WTC11 (cell line): ENCODE measurements at regions of chr5 and their contacts with region 1.

Region 1: GRCh38 chr5:57137401-57137800 is 36.5 kb upstream of the GPBP1 start:
- DNase-seq: no peak
- ATAC-seq: no peak
- H3K4me3 Mint-ChIP-seq: no peak overlapping the region
- H3K27ac Mint-ChIP-seq: no peak overlapping the region
- H3K4me1 Mint-ChIP-seq: no peaks in the 10 kb centered on the region
- H3K27me3 Mint-ChIP-seq: no peaks in the 10 kb centered on the region; the same call in 1 of the 2 replicates
- CTCF ChIP-seq: no peak

Region 2: GRCh38 chr5:56900858-56901578 is 236.4 kb before region 1 on chr5:
- CTCF ChIA-PET with region 1: interaction called, 15 read pairs
- POLR2A ChIA-PET with region 1: no interaction called
- DNase-seq: peak; percentile 12
- ATAC-seq: peak; percentile 70
- H3K4me3 Mint-ChIP-seq: no peak overlapping the region
- H3K27ac Mint-ChIP-seq: no peak overlapping the region
- H3K4me1 Mint-ChIP-seq: no peaks in the 10 kb centered on the region
- H3K27me3 Mint-ChIP-seq: no peaks in the 10 kb centered on the region
- CTCF ChIP-seq: peak; percentile 48; the same call in 1 of the 2 replicates

Region 3: GRCh38 chr5:56909294-56910209 is 227.8 kb before region 1 on chr5 and contains the start of gene SETD9:
- CTCF ChIA-PET with region 1: interaction called, 22 read pairs
- POLR2A ChIA-PET with region 1: interaction called, 10 read pairs
- DNase-seq: peak; percentile 99
- ATAC-seq: peak; percentile 92
- H3K4me3 Mint-ChIP-seq: peak within 1 kb of the TSS; percentile 89
- H3K27ac Mint-ChIP-seq: peak within 1 kb of the TSS; percentile 98
- H3K4me1 Mint-ChIP-seq: peaks cover 28% of the 10 kb centered on the region
- H3K27me3 Mint-ChIP-seq: no peaks in the 10 kb centered on the region; the same call in 1 of the 2 replicates
- CTCF ChIP-seq: no peak
- total RNA-seq, gene SETD9: 6.7 to 9.5 TPM (median 8.1 TPM) in 3 replicates

Region 4: GRCh38 chr5:56950626-56951125 is 186.7 kb before region 1 on chr5:
- CTCF ChIA-PET with region 1: interaction called, 33 read pairs
- POLR2A ChIA-PET with region 1: interaction called, 8 read pairs
- DNase-seq: peak; percentile 53
- ATAC-seq: peak; percentile 60
- H3K4me3 Mint-ChIP-seq: peak overlapping the region; percentile 95
- H3K27ac Mint-ChIP-seq: peak overlapping the region; percentile 80
- H3K4me1 Mint-ChIP-seq: peaks cover 18% of the 10 kb centered on the region
- H3K27me3 Mint-ChIP-seq: peaks cover 20% of the 10 kb centered on the region
- CTCF ChIP-seq: no peak

Region 5: GRCh38 chr5:57094753-57095683 is 42.4 kb before region 1 on chr5:
- CTCF ChIA-PET with region 1: interaction called, 19 read pairs
- POLR2A ChIA-PET with region 1: interaction called, 3 read pairs
- DNase-seq: peak; percentile 81
- ATAC-seq: peak; percentile 84
- H3K4me3 Mint-ChIP-seq: no peak overlapping the region
- H3K27ac Mint-ChIP-seq: 0 out of 2 replicates have a peak overlapping the region, but pooled peaks have one; percentile 61
- H3K4me1 Mint-ChIP-seq: peaks cover 12% of the 10 kb centered on the region
- H3K27me3 Mint-ChIP-seq: peaks cover 3% of the 10 kb centered on the region
- CTCF ChIP-seq: peak; percentile 32; the same call in 1 of the 2 replicates

Region 6: DNA sequence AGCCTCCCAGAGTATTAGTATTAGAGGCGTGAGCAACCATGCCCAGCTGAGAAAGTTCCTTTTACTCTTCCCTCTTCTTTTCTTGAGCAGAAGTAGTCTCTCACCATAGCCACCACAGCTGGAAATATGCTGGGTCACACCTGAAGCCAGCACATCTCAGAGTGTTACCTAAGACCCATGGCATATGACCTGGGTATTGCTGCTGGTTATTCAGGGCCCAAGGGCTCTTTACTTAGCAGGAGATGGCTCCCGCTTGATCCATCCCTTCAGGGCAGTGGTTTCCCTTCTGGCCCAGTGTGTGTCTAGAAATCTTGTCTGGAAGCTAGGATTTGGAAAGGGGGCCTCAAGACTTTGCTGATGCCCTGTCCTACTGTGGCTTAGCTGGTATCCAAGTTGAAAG is 13.3 kb after region 1 on chr5:
- CTCF ChIA-PET with region 1: interaction called, 13 read pairs
- POLR2A ChIA-PET with region 1: interaction called, 4 read pairs
- DNase-seq: no peak
- ATAC-seq: no peak
- H3K4me3 Mint-ChIP-seq: no peak overlapping the region
- H3K27ac Mint-ChIP-seq: 0 out of 2 replicates have a peak overlapping the region, but pooled peaks have one; percentile 16
- H3K4me1 Mint-ChIP-seq: peaks cover 3% of the 10 kb centered on the region; the same call in 1 of the 2 replicates
- H3K27me3 Mint-ChIP-seq: no peaks in the 10 kb centered on the region
- CTCF ChIP-seq: no peak

Region 7: DNA sequence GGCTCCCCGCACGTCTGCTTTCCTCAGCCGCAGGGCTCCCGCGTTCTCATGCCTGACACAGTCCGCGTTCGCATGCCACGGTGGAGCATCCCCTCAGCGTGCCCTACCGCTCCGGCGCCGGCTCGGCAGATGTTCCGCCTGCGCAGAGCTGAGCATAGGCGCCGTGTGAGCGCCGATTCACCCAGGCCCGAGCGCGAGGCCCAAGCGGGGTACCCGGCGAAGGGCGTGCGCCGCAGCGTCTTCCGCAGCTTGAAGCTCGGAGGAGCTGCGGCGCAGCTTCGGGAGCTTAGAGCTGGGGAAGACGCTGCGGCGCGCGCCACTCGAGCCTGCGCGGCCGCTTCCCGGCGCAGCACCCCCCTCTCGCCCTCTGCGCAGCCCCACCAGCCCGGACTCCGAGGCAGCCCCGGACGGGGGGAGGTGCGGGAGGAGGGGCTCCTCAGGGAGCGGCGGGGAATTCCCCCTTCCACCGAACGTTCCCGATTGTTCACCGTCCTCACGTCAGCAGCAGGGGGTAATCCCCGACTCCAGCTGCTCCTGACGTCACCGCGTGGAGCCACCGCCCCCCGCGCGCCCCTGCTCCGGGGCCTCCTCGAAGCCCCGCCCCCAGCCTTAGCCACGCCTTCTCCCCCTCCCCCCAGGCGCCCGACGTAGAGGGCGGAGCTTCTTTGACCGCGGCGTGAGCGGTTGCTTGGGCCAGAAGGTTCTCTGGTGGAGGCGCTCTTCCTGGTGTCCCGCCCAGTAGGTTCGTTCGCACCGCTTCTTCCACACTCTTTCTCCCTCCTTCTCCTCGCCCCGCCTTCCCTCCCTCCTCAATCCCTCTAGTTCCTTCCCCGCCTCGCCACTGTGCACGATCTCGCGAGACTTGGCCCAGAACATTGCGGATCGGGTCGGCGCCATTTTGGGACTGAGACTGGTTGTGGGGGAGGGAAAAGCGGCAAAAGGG is 36.1 kb after region 1 on chr5 and contains the start of gene GPBP1:
- CTCF ChIA-PET with region 1: interaction called, 13 read pairs
- POLR2A ChIA-PET with region 1: no interaction called
- DNase-seq: peak; percentile 96
- ATAC-seq: peak; percentile 88
- H3K4me3 Mint-ChIP-seq: peak within 1 kb of the TSS; percentile 97
- H3K27ac Mint-ChIP-seq: peak within 1 kb of the TSS; percentile 100
- H3K4me1 Mint-ChIP-seq: peaks cover 30% of the 10 kb centered on the region
- H3K27me3 Mint-ChIP-seq: peaks cover 6% of the 10 kb centered on the region
- CTCF ChIP-seq: no peak
- total RNA-seq, gene GPBP1: 100 to 106 TPM (median 104 TPM) in 3 replicates